Activated CD8-positive, alpha-beta T cell treated with anti-CD3 and anti-CD28 coated beads, Interleukin-2, amount 10 ng/mL, durations not matched to agents 7 days and 5 days (primary cell): ENCODE measurements at regions of chr6 and their contacts with region 1.

Region 1: GRCh38 chr6:133923938-133924593 is 29.0 kb upstream of the TBPL1 start:
- DNase-seq: peak; percentile 72
- ATAC-seq: peak; percentile 78
- H3K4me3 Mint-ChIP-seq: no peak overlapping the region
- H3K27ac Mint-ChIP-seq: no peak overlapping the region
- H3K4me1 Mint-ChIP-seq: no peaks in the 10 kb centered on the region
- H3K27me3 Mint-ChIP-seq: peaks cover 22% of the 10 kb centered on the region

Region 2: GRCh38 chr6:133837801-133838349 is 86.2 kb before region 1 on chr6:
- CTCF ChIA-PET with region 1: interaction called, 13 read pairs
- POLR2A ChIA-PET with region 1: no interaction called
- DNase-seq: peak; percentile 71
- ATAC-seq: peak; percentile 92
- H3K4me3 Mint-ChIP-seq: peak overlapping the region; percentile 72
- H3K27ac Mint-ChIP-seq: no peak overlapping the region
- H3K4me1 Mint-ChIP-seq: peaks cover 3% of the 10 kb centered on the region
- H3K27me3 Mint-ChIP-seq: peaks cover 14% of the 10 kb centered on the region

Region 3: GRCh38 chr6:133871131-133871530 is 52.9 kb before region 1 on chr6:
- CTCF ChIA-PET with region 1: no interaction called
- POLR2A ChIA-PET with region 1: no interaction called
- DNase-seq: no peak
- ATAC-seq: no peak
- H3K4me3 Mint-ChIP-seq: no peak overlapping the region
- H3K27ac Mint-ChIP-seq: no peak overlapping the region
- H3K4me1 Mint-ChIP-seq: no peaks in the 10 kb centered on the region
- H3K27me3 Mint-ChIP-seq: peaks cover 12% of the 10 kb centered on the region

Region 4: DNA sequence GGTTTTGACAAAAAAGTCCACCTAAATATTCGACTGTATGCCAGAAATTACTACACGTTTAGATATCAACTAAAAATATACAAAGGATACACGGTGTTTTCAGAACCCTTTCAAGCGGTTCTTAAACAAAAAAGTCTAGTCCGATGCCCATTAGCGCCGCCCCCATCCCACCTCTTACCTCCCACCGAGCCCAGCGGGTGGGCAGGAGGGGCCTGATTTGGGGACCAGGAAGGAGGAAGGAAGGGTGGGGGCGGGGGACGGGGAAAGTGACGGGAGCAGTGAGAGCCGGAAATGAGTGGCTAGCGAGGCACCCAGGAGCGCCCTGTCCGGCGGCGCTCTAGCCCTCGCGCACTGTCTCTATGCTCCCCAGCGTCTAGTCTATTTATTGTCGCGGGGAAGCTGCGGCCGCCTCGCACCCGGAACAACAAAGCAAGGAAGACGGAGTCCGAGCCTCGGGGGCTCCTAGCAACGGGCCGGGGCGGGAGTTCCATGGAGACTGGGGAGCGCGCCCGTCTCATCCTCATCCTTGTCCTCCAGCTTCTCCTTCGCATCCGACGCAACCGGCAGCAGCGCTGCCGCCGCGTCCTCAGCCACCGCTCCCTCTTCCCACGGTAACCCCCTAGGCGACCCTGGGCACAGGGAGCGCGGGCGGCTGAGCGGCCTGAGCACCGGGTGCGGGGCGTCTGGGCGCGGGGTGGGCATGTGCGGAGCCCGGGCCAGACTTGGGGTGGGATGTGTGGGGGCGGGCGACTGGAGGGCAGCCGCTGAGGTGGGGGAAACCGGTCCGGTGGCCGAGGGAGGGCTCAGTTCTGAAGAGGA is 29.0 kb after region 1 on chr6 and contains the start of gene TBPL1:
- CTCF ChIA-PET with region 1: interaction called, 38 read pairs
- POLR2A ChIA-PET with region 1: interaction called, 4 read pairs
- DNase-seq: peak; percentile 92
- ATAC-seq: peak; percentile 94
- H3K4me3 Mint-ChIP-seq: peak within 1 kb of the TSS; percentile 95
- H3K27ac Mint-ChIP-seq: peak within 1 kb of the TSS; percentile 85
- H3K4me1 Mint-ChIP-seq: peaks cover 41% of the 10 kb centered on the region
- H3K27me3 Mint-ChIP-seq: peaks cover 10% of the 10 kb centered on the region
- total RNA-seq, gene TBPL1: 29.1 to 35.2 TPM

Region 5: GRCh38 chr6:133983099-133983939 is 59.3 kb after region 1 on chr6:
- CTCF ChIA-PET with region 1: interaction called, 14 read pairs
- POLR2A ChIA-PET with region 1: no interaction called
- DNase-seq: peak; percentile 69
- ATAC-seq: peak; percentile 92
- H3K4me3 Mint-ChIP-seq: peak overlapping the region; percentile 35
- H3K27ac Mint-ChIP-seq: peak overlapping the region; percentile 66
- H3K4me1 Mint-ChIP-seq: peaks cover 50% of the 10 kb centered on the region
- H3K27me3 Mint-ChIP-seq: no peaks in the 10 kb centered on the region

Region 6: GRCh38 chr6:134063966-134064445 is 139.9 kb after region 1 on chr6:
- CTCF ChIA-PET with region 1: interaction called, 125 read pairs
- POLR2A ChIA-PET with region 1: no interaction called
- DNase-seq: peak; percentile 72
- ATAC-seq: peak; percentile 90
- H3K4me3 Mint-ChIP-seq: no peak overlapping the region
- H3K27ac Mint-ChIP-seq: no peak overlapping the region
- H3K4me1 Mint-ChIP-seq: no peaks in the 10 kb centered on the region
- H3K27me3 Mint-ChIP-seq: peaks cover 9% of the 10 kb centered on the region

Region 7: GRCh38 chr6:134105924-134106323 is 181.9 kb after region 1 on chr6:
- CTCF ChIA-PET with region 1: interaction called, 78 read pairs
- POLR2A ChIA-PET with region 1: no interaction called
- DNase-seq: no peak
- ATAC-seq: no peak
- H3K4me3 Mint-ChIP-seq: no peak overlapping the region
- H3K27ac Mint-ChIP-seq: no peak overlapping the region
- H3K4me1 Mint-ChIP-seq: no peaks in the 10 kb centered on the region
- H3K27me3 Mint-ChIP-seq: peaks cover 21% of the 10 kb centered on the region